Activated CD4-positive, alpha-beta T cell treated with anti-CD3 and anti-CD28 coated beads, Interleukin-2, amount 10 ng/mL, durations not matched to agents 24 days and 14 days (primary cell): ENCODE measurements at regions of chrX and their contacts with region 1.

Region 1: DNA sequence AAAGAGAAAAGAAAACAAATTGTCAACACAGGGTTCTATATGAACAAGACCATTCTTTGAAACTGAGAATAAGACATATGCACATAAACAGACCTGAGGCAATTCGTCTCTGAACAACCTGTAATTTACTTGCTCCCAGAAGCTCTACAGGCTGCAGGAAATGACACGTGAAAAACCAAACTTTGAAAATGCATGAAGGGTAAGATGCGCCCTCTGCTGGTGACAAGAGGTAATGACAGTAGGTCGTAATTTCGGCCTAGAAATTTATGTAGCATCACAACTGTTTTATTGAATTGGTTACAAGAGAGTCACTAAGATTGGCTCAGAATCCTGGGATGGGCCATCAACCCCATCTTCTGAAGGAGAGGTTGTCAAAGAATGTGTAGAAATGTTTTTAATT is 276.5 kb downstream of the PPP4R3C start:
- DNase-seq: peak; percentile 66
- H3K4me3 Mint-ChIP-seq: no peak overlapping the region
- H3K27ac Mint-ChIP-seq: no peak overlapping the region
- H3K4me1 Mint-ChIP-seq: no peaks in the 10 kb centered on the region
- H3K27me3 Mint-ChIP-seq: no peaks in the 10 kb centered on the region

Region 2: GRCh38 chrX:26651755-26652154 is 534.9 kb before region 1 on chrX:
- intact Hi-C with region 1: loop called (anchors 5 kb)
- DNase-seq: no peak
- H3K4me3 Mint-ChIP-seq: no peak overlapping the region
- H3K27ac Mint-ChIP-seq: no peak overlapping the region
- H3K4me1 Mint-ChIP-seq: no peaks in the 10 kb centered on the region
- H3K27me3 Mint-ChIP-seq: no peaks in the 10 kb centered on the region

Region 3: GRCh38 chrX:26783512-26784225 is 403.0 kb before region 1 on chrX:
- intact Hi-C with region 1: loop called (anchors 1 kb)
- DNase-seq: peak; percentile 57
- H3K4me3 Mint-ChIP-seq: no peak overlapping the region
- H3K27ac Mint-ChIP-seq: no peak overlapping the region
- H3K4me1 Mint-ChIP-seq: no peaks in the 10 kb centered on the region
- H3K27me3 Mint-ChIP-seq: no peaks in the 10 kb centered on the region

Region 4: DNA sequence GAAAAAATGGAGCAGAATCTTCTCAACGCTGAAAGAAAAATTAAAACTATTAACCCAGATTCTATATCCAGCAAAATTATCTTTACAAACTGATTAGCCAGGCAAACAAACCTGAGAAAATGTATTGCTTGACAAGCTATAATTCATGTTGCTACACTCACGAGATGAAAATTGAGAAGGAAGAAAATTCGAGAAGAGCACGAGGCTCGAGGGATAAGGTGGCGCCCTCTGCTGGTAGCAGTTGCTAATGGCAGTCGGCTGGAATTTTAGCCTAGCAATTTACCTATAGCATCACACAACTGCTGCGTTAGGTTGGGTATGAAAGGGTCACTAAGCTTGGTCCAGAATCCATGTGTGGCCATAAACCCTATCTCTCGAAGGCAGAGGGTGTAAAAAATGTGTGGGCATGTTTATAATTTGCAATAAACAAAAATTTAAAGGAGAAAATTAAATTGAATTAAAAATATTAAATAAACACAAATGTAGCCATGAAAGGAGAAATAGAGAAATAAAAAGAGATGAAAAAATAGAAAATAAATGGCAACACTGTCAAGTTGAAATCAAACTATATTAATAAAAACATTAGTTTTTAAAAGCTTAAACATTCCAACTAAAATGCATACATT is 149.9 kb after region 1 on chrX:
- intact Hi-C with region 1: no loop called
- DNase-seq: peak; percentile 66
- H3K4me3 Mint-ChIP-seq: no peak overlapping the region
- H3K27ac Mint-ChIP-seq: no peak overlapping the region
- H3K4me1 Mint-ChIP-seq: no peaks in the 10 kb centered on the region
- H3K27me3 Mint-ChIP-seq: no peaks in the 10 kb centered on the region